Dendritic cell treated with granulocyte-macrophage colony-stimulating factor and Interleukin-4, amounts not matched to agents 40 ng/mL and 50 ng/mL, for 4 days (primary cell): ENCODE measurements at regions of chr2 and their contacts with region 1.

Region 1: DNA sequence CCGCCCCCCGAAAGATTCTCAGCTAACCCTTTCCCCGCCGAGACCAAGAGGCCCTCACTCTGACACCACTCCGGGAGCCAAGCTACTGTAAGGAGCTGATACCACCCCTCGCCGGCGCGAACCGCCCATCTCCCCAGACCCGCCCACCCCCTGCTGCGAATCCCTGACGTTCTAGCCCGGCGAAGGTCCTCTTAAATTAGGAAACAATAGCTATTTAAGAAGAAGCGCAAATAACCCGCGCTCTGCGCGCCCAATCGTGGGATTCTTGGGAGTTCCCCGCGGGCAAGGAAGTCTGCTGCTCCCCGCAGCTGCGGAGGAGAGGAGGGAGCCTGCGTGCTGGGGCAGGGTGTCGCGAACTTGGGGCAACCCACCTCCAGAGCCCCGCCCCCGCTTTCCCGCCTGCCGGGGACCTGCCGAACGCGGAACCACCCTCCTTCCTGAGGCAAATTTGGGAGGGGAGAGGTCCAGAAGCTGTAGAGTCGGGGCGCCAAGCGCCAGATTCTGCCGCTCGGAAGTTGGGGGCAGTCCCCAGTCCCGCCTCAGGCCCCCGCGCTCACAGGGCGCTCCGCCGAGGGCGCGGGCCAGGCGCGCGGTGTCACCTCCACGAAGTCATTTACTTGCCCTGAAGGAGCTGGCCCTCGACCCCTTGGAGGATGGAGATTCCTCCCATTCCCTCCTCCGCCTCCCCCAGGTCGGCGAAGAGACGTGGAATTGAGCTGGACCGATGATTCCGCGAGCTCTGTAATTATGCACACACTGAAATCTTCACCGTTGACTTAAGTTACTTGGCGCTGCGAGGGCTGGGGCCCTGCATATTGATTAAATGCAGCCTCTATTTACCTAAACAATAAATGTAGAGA is 8.4 kb upstream of the SP9 start:
- H3K4me3 Mint-ChIP-seq: peak overlapping the region; percentile 81
- H3K27ac Mint-ChIP-seq: peak overlapping the region; percentile 81
- H3K4me1 Mint-ChIP-seq: peaks cover 40% of the 10 kb centered on the region
- H3K27me3 Mint-ChIP-seq: peaks cover 79% of the 10 kb centered on the region

Region 2: DNA sequence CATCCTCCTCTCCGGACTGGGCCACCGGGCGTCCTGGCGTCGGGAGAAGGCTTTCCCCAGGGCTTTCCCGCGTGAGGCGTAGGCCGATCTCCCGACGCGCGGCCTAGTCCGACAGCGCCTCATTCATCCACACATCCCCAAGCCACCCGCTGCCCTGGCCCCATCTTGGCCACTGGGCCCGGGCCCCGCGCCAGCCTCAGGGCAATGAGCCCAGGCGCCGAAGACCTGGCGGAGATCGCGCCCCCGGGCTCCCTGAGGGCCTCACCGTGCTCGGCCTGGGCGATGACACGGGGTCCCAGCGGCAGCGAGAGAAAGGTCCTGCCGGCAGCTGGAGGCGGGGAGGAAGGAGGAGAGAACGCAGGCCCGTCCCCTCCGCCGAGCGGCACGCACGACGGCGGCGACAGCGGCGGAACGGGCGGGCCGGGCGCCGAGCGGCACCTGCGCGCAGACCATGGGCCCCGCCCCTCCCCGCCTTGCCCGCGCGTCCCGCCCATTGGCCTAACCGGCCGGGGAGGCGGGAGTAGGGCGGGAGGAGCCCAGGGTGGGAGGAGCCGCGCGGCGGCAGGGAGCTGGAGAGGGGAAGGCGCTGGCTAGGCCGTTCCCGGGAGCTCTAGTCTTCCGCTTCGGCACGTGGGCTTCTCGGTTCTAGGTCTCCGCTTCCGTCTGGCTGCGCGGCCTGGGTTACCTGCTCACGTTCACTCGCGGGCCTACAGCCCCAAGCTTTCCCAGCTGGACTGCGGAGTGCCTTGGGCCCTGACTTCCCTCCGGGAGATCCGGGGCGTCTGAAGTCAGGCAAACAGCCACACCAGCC is 78.0 kb before region 1 on chr2 and contains the start of gene OLA1:
- intact Hi-C with region 1: loop called (anchors 5 kb)
- H3K4me3 Mint-ChIP-seq: peak within 1 kb of the TSS; percentile 79
- H3K27ac Mint-ChIP-seq: peak within 1 kb of the TSS; percentile 86
- H3K4me1 Mint-ChIP-seq: peaks cover 9% of the 10 kb centered on the region
- H3K27me3 Mint-ChIP-seq: no peaks in the 10 kb centered on the region

Region 3: GRCh38 chr2:174546581-174547506 is 220.5 kb after region 1 on chr2:
- intact Hi-C with region 1: no loop called
- H3K4me3 Mint-ChIP-seq: no peak overlapping the region
- H3K27ac Mint-ChIP-seq: no peak overlapping the region
- H3K4me1 Mint-ChIP-seq: peaks cover 6% of the 10 kb centered on the region
- H3K27me3 Mint-ChIP-seq: peaks cover 16% of the 10 kb centered on the region